ENCODE measurements at regions of chr7 and their contacts with region 1.

Region 1: GRCh38 chr7:139104091-139104450 is 5.4 kb downstream of the ZC3HAV1 start:
- DNase-seq: peak in 3 of 10 donors; percentile 46 to 57 (median 53)
- ATAC-seq: peak; percentile 15 to 31
- H3K4me3 Mint-ChIP-seq: peak overlapping the region; percentile 90 to 100 (median 98)
- H3K27ac Mint-ChIP-seq: peak overlapping the region; percentile 86 to 97 (median 92)
- H3K4me1 Mint-ChIP-seq: peaks cover 18 to 53% (median 43%) of the 10 kb centered on the region in 4 donors
- H3K27me3 Mint-ChIP-seq: no peaks in the 10 kb centered on the region

Region 2: GRCh38 chr7:138729444-138729843 is 374.6 kb before region 1 on chr7:
- POLR2A ChIA-PET with region 1: no interaction called
- DNase-seq: no peak
- ATAC-seq: no peak
- H3K4me3 Mint-ChIP-seq: no peak overlapping the region
- H3K27ac Mint-ChIP-seq: no peak overlapping the region
- H3K4me1 Mint-ChIP-seq: peaks cover 0 to 4% (median under 1%) of the 10 kb centered on the region in 4 donors
- H3K27me3 Mint-ChIP-seq: peaks cover 0 to 1% (median 0%) of the 10 kb centered on the region in 5 donors

Region 3: GRCh38 chr7:139075031-139075652 is 28.9 kb before region 1 on chr7:
- POLR2A ChIA-PET with region 1: interaction called, 10 read pairs
- DNase-seq: peak; percentile 27 to 85 (median 71)
- ATAC-seq: peak; percentile 71 to 80
- H3K4me3 Mint-ChIP-seq: peak overlapping the region; percentile 16 to 83 (median 55)
- H3K27ac Mint-ChIP-seq: peak overlapping the region; percentile 29 to 96 (median 90)
- H3K4me1 Mint-ChIP-seq: peaks cover 20 to 79% (median 70%) of the 10 kb centered on the region in 4 donors
- H3K27me3 Mint-ChIP-seq: no peaks in the 10 kb centered on the region

Region 4: DNA sequence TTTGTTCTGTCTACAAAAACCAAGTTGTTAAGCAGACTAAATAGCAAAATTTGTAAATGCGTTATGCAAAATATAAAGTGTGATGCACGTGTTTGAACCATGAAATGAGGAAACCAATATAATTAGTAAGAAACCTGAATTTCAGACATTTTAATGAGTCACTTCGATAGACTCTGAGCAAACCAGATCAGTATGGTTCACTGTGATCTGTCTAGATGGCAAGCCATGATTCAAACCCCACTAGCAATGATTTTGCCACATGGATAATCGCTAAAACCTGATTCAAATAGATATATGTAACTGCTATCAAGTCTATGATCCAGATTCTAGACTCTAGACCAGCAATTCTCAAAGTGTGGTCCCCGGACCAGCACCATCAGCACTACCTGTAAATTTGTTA is 19.4 kb before region 1 on chr7:
- POLR2A ChIA-PET with region 1: interaction called, 17 read pairs
- DNase-seq: no peak
- ATAC-seq: peak in 1 of 2 donors; percentile 13
- H3K4me3 Mint-ChIP-seq: peak overlapping the region in 9 of 10 donors; percentile 10 to 81 (median 74)
- H3K27ac Mint-ChIP-seq: peak overlapping the region in 9 of 10 donors; percentile 81 to 95 (median 89)
- H3K4me1 Mint-ChIP-seq: peaks cover 51 to 98% (median 92%) of the 10 kb centered on the region in 4 donors
- H3K27me3 Mint-ChIP-seq: no peaks in the 10 kb centered on the region

Measured in naive thymus-derived CD8-positive, alpha-beta T cell (primary cell).